Pancreas (tissue), 10 donors: ENCODE measurements at regions of chr5 and their contacts with region 1.

Region 1: DNA sequence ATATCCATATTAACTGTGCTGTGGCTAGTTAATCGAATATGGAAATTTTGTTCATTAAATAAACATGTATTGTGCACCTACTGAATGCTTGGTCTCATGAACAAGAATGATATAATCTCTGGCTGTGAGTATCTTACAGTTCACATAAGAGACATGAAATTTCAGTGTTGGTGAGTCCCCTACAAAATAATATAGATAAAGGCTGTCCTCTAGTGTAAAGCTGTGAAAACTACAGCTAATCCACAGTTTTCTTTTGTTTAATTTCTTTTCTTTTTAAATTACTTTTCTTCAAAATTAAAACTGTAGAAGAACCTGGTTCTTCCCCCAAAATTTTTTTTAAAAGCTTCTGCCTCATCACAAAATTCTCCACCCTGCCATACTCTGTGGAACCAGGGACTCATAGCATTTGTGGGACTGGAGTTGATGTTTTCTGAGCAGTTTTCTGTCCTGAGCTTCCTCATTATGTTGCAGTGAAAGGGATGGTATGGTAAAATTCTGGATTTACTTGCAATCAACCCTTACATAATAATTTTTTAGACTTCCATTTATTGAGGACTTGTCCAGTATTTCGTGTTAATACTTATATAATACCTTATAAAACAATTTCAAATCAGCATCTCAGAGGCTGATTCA is 135.0 kb downstream of the STK32A start:
- DNase-seq: no peak
- ATAC-seq: peak in 3 of 4 donors; percentile 80 to 86 (median 80)
- H3K4me3 ChIP-seq: no peak overlapping the region
- H3K27ac ChIP-seq: no peak overlapping the region
- H3K4me1 ChIP-seq: no peaks in the 10 kb centered on the region
- H3K27me3 ChIP-seq: no peaks in the 10 kb centered on the region
- CTCF ChIP-seq: peak in 3 of 4 donors; percentile 33 to 47 (median 33)

Region 2: GRCh38 chr5:147223948-147224791 is 145.7 kb before region 1 on chr5:
- intact Hi-C with region 1: loop called in 2 of 3 experiments (anchors 10 kb)
- DNase-seq: peak in 3 of 6 donors; percentile 16 to 51 (median 29)
- ATAC-seq: peak in 3 of 4 donors; percentile 87 to 92 (median 91)
- H3K4me3 ChIP-seq: no peak overlapping the region
- H3K27ac ChIP-seq: no peak overlapping the region
- H3K4me1 ChIP-seq: no peaks in the 10 kb centered on the region
- H3K27me3 ChIP-seq: no peaks in the 10 kb centered on the region
- CTCF ChIP-seq: peak; percentile 24 to 48 (median 40)

Region 3: DNA sequence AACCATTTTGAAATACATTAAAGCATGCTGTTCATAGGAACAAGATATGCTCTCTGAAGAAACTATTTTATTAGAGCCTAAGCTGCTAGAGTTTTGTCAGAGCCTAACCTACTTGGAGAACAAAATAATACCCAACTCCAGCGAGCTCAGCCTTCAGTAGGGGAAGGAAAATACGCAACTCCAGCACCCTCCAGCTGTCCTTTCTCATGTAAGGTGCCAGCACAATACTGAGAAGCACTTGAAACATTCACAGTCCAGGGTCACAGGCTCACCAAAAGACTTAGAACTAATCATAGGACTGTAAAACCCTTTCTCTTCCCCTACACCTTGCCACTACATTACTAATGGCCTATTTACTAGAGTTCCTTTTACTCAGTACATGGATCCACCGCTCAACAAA is 121.1 kb after region 1 on chr5:
- intact Hi-C with region 1: no loop called
- DNase-seq: no peak
- ATAC-seq: no peak
- H3K4me3 ChIP-seq: no peak overlapping the region
- H3K27ac ChIP-seq: no peak overlapping the region
- H3K4me1 ChIP-seq: no peaks in the 10 kb centered on the region
- H3K27me3 ChIP-seq: no peaks in the 10 kb centered on the region
- CTCF ChIP-seq: no peak